ENCODE measurements at regions of chr20 and their contacts with region 1.

Region 1: GRCh38 chr20:8073116-8073832 is 53.7 kb upstream of the TMX4 start:
- DNase-seq: no peak
- ATAC-seq: peak; percentile 86
- H3K4me3 Mint-ChIP-seq: no peak overlapping the region
- H3K27ac Mint-ChIP-seq: peak overlapping the region; percentile 75
- H3K4me1 Mint-ChIP-seq: peaks cover 9% of the 10 kb centered on the region
- H3K27me3 Mint-ChIP-seq: no peaks in the 10 kb centered on the region

Region 2: GRCh38 chr20:7967199-7967844 is 106.0 kb before region 1 on chr20:
- CTCF ChIA-PET with region 1: no interaction called
- POLR2A ChIA-PET with region 1: no interaction called
- intact Hi-C with region 1: no loop called
- DNase-seq: no peak
- ATAC-seq: no peak
- H3K4me3 Mint-ChIP-seq: no peak overlapping the region
- H3K27ac Mint-ChIP-seq: no peak overlapping the region
- H3K4me1 Mint-ChIP-seq: no peaks in the 10 kb centered on the region
- H3K27me3 Mint-ChIP-seq: peaks cover 8% of the 10 kb centered on the region

Region 3: GRCh38 chr20:8019246-8019997 is 53.9 kb before region 1 on chr20 and contains the start of gene TMX4:
- CTCF ChIA-PET with region 1: interaction called, 3 read pairs
- POLR2A ChIA-PET with region 1: no interaction called
- intact Hi-C with region 1: loop called in 1 of 2 experiments (anchors 5 kb)
- DNase-seq: peak; percentile 94
- ATAC-seq: peak; percentile 84
- H3K4me3 Mint-ChIP-seq: peak within 1 kb of the TSS; percentile 85
- H3K27ac Mint-ChIP-seq: peak within 1 kb of the TSS; percentile 75
- H3K4me1 Mint-ChIP-seq: peaks cover 24% of the 10 kb centered on the region
- H3K27me3 Mint-ChIP-seq: no peaks in the 10 kb centered on the region
- total RNA-seq, gene TMX4: 19.2 to 25.9 TPM